ENCODE measurements at regions of chr3 and their contacts with region 1.

Region 1: GRCh38 chr3:154904328-154904727 is 175.8 kb upstream of the MME start:
- DNase-seq: no peak
- ATAC-seq: no peak

Region 2: GRCh38 chr3:154684021-154684420 is 220.3 kb before region 1 on chr3:
- intact Hi-C with region 1: no loop called
- DNase-seq: no peak
- ATAC-seq: no peak

Region 3: GRCh38 chr3:155101398-155101797 is 197.1 kb after region 1 on chr3:
- intact Hi-C with region 1: loop called (anchors 10 kb)
- DNase-seq: no peak
- ATAC-seq: peak; percentile 89

Measured in Right ventricle myocardium inferior (tissue), 1 donor.